ENCODE measurements at regions of chr16 and their contacts with region 1.

Region 1: GRCh38 chr16:66830422-66831404 is at the start of gene NAE1:
- DNase-seq: peak; percentile 86 to 91 (median 89)
- H3K4me3 ChIP-seq: peak within 1 kb of the TSS; percentile 68
- H3K4me3 Mint-ChIP-seq: peak within 1 kb of the TSS; percentile 76 to 91 (median 78)
- H3K27ac ChIP-seq: peak within 1 kb of the TSS; percentile 81
- H3K27ac Mint-ChIP-seq: peak within 1 kb of the TSS; percentile 41 to 94 (median 70)
- H3K4me1 ChIP-seq: peaks cover 28% of the 10 kb centered on the region
- H3K4me1 Mint-ChIP-seq: peaks cover 31 to 44% (median 37%) of the 10 kb centered on the region in 3 donors
- H3K27me3 ChIP-seq: no peaks in the 10 kb centered on the region
- H3K27me3 Mint-ChIP-seq: peaks cover 0 to 4% of the 10 kb centered on the region in 2 donors
- total RNA-seq, gene NAE1: 105 to 110 TPM

Region 2: GRCh38 chr16:66844342-66845079 is 13.8 kb after region 1 on chr16 and contains the start of gene CA7:
- CTCF ChIA-PET with region 1: interaction called, 19 read pairs
- POLR2A ChIA-PET with region 1: no interaction called
- DNase-seq: no peak
- H3K4me3 ChIP-seq: no peak within 1 kb of the TSS
- H3K4me3 Mint-ChIP-seq: peak within 1 kb of the TSS in 6 of 7 donors; percentile 13 to 71 (median 64)
- H3K27ac ChIP-seq: no peak within 1 kb of the TSS
- H3K27ac Mint-ChIP-seq: peak within 1 kb of the TSS in 2 of 8 donors; percentile 21 to 65
- H3K4me1 ChIP-seq: no peaks in the 10 kb centered on the region
- H3K4me1 Mint-ChIP-seq: peaks cover 3 to 16% (median 5%) of the 10 kb centered on the region in 3 donors
- H3K27me3 ChIP-seq: peaks cover 15% of the 10 kb centered on the region
- H3K27me3 Mint-ChIP-seq: peaks cover 39 to 48% of the 10 kb centered on the region in 2 donors
- total RNA-seq, gene CA7: not detected

Region 3: DNA sequence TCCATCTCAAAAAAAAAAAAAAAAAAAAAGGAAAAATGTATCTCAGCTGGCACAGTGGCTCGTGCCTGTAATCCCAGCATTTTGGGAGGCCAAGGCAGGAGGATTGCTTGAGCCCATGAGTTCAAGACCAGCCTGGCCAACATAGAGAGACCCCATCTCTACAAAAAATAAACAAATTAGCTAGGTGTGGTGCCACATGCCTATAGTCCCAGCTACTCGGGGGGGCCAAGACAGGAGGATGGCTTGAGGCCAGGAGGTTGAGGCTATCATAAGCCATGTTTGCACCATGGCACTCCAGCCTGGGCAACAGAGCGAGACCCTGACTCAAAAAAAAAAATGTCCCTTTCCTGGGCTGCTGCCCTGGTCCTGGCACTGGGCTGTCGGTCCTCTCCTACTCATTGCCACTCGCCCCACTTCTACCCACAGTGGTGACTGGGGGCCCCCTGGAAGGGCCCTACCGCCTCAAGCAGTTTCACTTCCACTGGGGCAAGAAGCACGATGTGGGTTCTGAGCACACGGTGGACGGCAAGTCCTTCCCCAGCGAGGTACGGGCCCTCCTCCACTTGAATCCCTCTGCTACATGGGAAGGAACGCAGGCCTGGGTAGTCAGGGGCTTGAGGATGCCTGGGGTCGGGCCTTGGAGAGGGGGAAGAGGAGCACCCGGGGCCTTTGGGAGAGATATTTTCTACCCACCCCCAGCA is 19.6 kb after region 1 on chr16:
- CTCF ChIA-PET with region 1: interaction called, 14 read pairs
- POLR2A ChIA-PET with region 1: no interaction called
- DNase-seq: no peak
- H3K4me3 ChIP-seq: no peak overlapping the region
- H3K4me3 Mint-ChIP-seq: no peak overlapping the region
- H3K27ac ChIP-seq: no peak overlapping the region
- H3K27ac Mint-ChIP-seq: no peak overlapping the region
- H3K4me1 ChIP-seq: no peaks in the 10 kb centered on the region
- H3K4me1 Mint-ChIP-seq: peaks cover 0 to 4% (median 0%) of the 10 kb centered on the region in 3 donors
- H3K27me3 ChIP-seq: peaks cover 9% of the 10 kb centered on the region
- H3K27me3 Mint-ChIP-seq: peaks cover 16% of the 10 kb centered on the region in 2 donors

Region 4: DNA sequence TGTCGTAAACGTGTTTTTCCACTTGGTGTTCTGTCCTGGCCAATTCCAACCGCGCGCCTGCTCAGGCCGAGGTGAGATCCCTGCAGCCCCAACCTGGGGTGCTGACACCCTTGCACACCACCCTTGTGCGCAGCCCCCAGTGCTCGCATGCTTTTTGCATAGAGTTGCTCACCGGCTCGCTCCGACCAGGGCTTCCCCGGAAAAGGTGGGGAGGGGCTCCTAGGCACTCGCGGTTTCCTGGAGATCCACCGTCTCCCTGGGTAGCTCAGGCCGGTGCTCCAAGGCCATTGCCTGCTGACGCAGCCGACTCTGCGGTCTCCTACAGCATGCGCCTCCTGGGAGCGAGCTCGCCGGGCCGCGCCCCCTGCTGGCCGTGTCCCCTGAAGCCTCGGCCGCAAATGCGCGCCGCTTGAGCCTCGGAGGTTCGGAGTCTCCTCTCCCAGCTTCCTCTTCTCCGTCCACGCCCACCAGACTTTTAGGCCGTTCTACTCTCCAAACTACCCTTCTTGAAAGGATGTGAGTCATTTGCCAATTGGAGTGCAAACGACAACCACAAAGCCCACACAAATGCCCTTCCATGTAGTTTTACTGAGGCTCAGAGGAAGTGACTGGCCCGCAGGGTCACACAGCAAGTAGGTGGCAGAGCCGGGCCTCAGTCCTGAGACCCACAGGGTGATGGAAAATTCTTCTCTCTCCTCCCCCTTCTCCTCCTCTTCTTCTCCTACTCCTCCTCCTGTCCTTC is 42.4 kb after region 1 on chr16:
- CTCF ChIA-PET with region 1: interaction called, 58 read pairs
- POLR2A ChIA-PET with region 1: interaction called, 9 read pairs
- DNase-seq: peak; percentile 76 to 91 (median 84)
- H3K4me3 ChIP-seq: peak overlapping the region; percentile 69
- H3K4me3 Mint-ChIP-seq: peak overlapping the region; percentile 73 to 93 (median 83)
- H3K27ac ChIP-seq: peak overlapping the region; percentile 35
- H3K27ac Mint-ChIP-seq: peak overlapping the region; percentile 30 to 99 (median 86)
- H3K4me1 ChIP-seq: peaks cover 17% of the 10 kb centered on the region
- H3K4me1 Mint-ChIP-seq: peaks cover 26 to 27% (median 26%) of the 10 kb centered on the region in 3 donors
- H3K27me3 ChIP-seq: no peaks in the 10 kb centered on the region
- H3K27me3 Mint-ChIP-seq: peaks cover 0 to 2% of the 10 kb centered on the region in 2 donors

Region 5: DNA sequence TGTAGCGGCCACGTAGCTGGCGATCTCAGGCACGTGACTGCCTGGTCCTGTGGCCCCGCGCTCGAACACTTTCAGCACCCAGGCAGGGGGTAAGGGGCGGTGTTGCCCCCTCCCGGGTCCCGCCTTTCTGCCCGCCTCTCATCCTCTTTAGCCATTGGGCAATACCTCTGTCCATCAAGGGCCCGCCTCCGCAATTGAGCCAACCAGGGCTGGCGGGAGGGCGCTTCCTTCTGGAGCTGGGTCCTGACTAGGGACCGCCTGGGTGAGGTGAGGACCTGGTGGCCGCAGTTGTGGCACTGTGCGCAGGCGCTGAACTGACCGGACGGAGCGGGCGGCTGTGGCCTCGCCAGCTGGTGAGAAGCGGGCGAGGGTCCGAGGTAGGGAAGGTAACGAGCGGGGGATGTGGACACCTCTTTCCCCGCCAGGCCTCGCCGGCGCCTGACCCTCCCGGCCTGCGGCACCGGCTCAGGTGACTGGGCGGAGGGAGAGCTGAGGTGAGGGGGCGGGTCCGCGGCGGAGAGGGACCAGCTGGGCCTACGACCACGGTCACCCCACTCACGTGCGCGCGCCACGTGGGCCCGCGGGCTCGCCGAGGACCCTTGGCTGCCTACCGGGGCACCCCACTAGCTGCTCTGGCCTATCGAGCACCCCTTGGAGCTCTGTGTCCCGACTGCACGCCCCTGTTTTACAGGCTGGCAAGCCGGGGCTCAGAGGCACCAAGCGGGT is 49.7 kb after region 1 on chr16 and contains the start of gene PDP2:
- CTCF ChIA-PET with region 1: interaction called, 14 read pairs
- POLR2A ChIA-PET with region 1: interaction called, 4 read pairs
- DNase-seq: peak; percentile 80 to 94 (median 89)
- H3K4me3 ChIP-seq: peak within 1 kb of the TSS; percentile 80
- H3K4me3 Mint-ChIP-seq: peak within 1 kb of the TSS; percentile 96 to 99 (median 98)
- H3K27ac ChIP-seq: peak within 1 kb of the TSS; percentile 58
- H3K27ac Mint-ChIP-seq: peak within 1 kb of the TSS; percentile 49 to 99 (median 96)
- H3K4me1 ChIP-seq: peaks cover 21% of the 10 kb centered on the region
- H3K4me1 Mint-ChIP-seq: peaks cover 25 to 43% (median 41%) of the 10 kb centered on the region in 3 donors
- H3K27me3 ChIP-seq: no peaks in the 10 kb centered on the region
- H3K27me3 Mint-ChIP-seq: no peaks in the 10 kb centered on the region
- total RNA-seq, gene PDP2: 20.0 to 25.4 TPM

Measured in CD8-positive, alpha-beta memory T cell (primary cell).